ENCODE measurements at regions of chr10 and their contacts with region 1.

Region 1: DNA sequence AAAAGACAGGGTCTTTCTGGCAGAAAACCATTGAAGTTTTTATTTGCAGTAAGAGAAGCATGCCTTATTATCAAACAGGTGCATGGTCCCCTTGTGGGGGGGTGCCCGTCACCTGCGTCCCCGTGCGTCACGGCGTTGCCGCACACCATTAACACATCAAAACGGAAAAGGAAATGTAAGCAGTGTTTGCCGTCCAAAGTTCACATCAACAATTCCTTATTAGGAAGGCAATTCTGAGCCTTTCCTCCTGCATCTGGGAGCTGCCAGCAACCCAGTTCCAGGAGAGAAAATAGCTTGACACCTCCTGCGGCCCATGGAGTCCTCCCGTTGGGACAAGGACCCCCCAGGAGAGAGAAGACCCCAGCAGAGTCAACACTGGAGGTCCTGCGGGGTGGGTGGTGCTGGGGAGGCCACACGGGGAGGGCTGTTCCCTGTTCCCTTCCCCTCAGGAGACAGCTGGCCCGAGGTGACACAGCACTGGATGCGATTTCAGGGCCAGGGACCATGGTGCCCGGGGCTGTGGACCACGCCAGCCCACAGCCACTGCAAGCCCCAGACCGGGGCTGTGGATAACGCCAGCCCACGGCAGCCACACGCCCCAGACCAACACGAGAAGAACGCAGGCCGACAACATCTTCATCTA is 39.5 kb downstream of the DIP2C start:
- DNase-seq: no peak
- H3K4me3 ChIP-seq: peak overlapping the region in 2 of 3 donors; percentile 6 to 40
- H3K27ac ChIP-seq: peak overlapping the region in 1 of 2 donors; percentile 66
- H3K4me1 ChIP-seq: peaks cover 0 to 3% of the 10 kb centered on the region in 2 donors
- H3K27me3 ChIP-seq: no peaks in the 10 kb centered on the region
- CTCF ChIP-seq: no peak
- POLR2A ChIP-seq: no peak

Region 2: DNA sequence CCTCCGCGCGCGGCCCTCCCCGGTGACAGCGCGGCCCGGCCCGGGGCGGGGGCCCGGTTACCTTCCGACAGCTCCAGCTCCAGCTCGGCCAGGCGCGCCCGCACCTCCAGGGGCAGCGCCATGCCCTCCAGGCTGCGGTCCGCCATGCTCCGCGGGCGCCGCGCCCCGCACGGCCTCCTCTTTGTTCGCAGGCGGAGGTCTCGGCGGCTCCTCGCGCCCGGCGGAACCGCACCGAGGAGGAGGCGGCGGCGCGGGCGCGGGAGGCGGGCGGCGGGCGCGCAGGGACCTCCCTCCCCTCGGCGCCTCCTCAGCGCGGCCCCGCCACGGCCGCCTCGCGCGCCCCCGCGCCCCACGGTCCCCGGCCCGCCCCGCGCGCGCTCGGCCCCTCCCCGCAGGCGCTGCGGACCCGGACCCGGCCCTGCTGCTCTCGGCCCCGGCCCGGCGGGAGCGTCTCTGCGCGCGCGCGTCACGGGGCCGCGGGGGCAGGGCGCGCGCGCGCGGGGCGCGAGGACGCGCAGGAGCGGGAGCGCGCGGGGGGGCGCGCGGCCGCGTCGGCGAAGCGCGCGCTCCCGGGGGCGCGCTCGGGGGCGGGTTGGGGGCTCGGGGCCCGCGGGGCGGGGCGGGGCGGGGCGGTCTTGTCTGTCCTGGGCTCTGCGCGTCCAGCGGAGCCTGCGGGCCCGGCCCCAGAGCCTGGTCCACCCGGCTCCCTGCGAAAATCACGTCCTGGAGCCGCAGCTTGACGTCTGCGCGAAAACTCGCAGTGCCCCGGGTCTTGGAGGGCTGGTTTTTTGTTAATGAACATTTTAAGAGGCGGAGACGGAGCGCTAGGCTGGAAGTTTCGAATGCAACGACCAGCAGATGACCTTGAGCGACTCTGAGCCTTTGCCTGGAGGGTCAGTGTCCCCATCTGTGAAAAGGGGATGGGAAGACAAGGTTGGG is 39.8 kb after region 1 on chr10 and contains the start of gene DIP2C:
- intact Hi-C with region 1: loop called (anchors 1 kb)
- DNase-seq: no peak
- H3K4me3 ChIP-seq: peak within 1 kb of the TSS; percentile 77 to 97 (median 84)
- H3K27ac ChIP-seq: peak within 1 kb of the TSS; percentile 77 to 91
- H3K4me1 ChIP-seq: peaks cover 0 to 7% of the 10 kb centered on the region in 2 donors
- H3K27me3 ChIP-seq: no peaks in the 10 kb centered on the region
- CTCF ChIP-seq: no peak
- POLR2A ChIP-seq: no peak
- total RNA-seq, gene DIP2C: 17.1 to 48.2 (median 20.3) TPM

Region 3: GRCh38 chr10:878333-878759 is 228.4 kb after region 1 on chr10:
- intact Hi-C with region 1: no loop called
- DNase-seq: no peak
- H3K4me3 ChIP-seq: no peak overlapping the region
- H3K27ac ChIP-seq: peak overlapping the region in 1 of 2 donors; percentile 83
- H3K4me1 ChIP-seq: no peaks in the 10 kb centered on the region
- H3K27me3 ChIP-seq: no peaks in the 10 kb centered on the region
- CTCF ChIP-seq: no peak
- POLR2A ChIP-seq: no peak

Region 4: GRCh38 chr10:2005546-2005945 is 1355.6 kb after region 1 on chr10:
- intact Hi-C with region 1: loop called (anchors 10 kb)
- DNase-seq: no peak
- H3K4me3 ChIP-seq: no peak overlapping the region
- H3K27ac ChIP-seq: no peak overlapping the region
- H3K4me1 ChIP-seq: no peaks in the 10 kb centered on the region
- H3K27me3 ChIP-seq: peaks cover 0 to 3% of the 10 kb centered on the region in 2 donors
- CTCF ChIP-seq: no peak
- POLR2A ChIP-seq: no peak

Measured in breast epithelium (tissue), 4 donors.